ENCODE measurements at regions of chr17 and their contacts with region 1.

Region 1: DNA sequence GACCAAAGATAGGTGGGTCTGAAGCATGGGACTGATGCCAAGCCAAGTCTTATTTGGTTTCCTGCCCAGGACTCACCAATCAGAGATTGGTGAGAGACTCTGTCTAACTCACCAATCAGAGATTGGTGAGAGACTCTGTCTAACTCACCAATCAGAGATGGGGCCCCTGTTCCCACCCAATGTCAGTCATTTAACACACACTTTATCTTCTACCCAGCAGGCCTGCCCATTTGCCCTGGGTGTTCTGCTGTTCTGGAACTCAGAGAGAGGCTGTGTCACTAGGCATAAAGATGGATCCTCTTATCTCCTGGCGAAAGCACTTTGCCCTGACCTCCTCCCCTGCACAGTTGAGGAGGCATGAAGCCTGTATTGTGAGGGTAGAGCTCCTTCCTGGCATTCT is 5.4 kb upstream of the RHOT1 start:
- DNase-seq: peak in 2 of 10 donors; percentile 2 to 7
- H3K4me3 ChIP-seq: no peak overlapping the region
- H3K27ac ChIP-seq: no peak overlapping the region
- H3K27me3 ChIP-seq: no peaks in the 10 kb centered on the region
- CTCF ChIP-seq: no peak

Region 2: DNA sequence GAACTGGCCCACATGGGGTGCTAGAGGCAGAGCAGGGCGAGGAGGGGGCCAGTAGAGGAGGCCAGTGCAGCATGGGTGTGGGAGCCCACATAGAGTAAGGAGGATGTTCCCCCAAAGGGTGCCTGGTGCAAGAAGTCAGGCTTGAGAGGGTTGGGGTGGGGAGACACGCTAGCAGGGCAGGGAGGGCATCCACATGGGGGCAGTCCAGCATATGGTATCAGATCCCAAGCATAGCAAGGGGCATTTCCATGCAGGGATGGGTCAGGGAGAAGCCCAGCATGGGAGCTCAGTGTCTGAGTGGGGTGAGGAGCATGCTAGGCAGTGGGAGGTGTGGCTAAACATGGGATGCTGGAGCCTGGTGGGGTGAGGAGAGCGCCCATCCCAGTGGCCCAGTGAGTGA is 491.5 kb before region 1 on chr17:
- intact Hi-C with region 1: no loop called
- DNase-seq: no peak
- H3K4me3 ChIP-seq: no peak overlapping the region
- H3K27ac ChIP-seq: no peak overlapping the region
- H3K27me3 ChIP-seq: peaks cover 0 to 6% (median 0%) of the 10 kb centered on the region in 45 donors
- CTCF ChIP-seq: no peak

Region 3: DNA sequence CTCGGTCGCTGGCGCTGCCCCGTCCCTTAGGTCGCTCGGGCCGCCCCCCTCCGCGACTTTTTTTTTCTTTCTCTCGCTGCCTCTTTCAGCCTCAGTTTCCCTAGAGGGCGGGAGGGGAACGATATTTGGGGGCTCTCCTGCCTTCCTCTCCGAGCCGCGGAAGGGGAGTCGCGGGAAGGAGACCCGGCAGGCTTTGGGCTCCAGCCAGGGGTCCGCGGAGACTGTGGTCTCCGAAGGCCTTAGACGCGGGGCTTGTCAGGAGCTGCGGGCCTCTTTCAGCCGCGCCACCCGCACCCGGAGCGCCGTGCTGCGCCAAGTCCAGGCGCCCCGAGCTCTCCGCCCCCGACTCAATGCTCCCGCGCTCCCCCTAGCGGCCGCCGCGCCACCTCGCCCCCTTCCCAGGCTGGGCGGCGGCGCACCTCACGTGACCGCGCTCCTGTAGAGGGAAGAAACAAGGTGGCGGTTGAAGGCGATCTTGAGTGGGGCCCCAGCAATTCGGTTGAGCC is 129.8 kb before region 1 on chr17 and contains the start of gene LRRC37B:
- intact Hi-C with region 1: loop called (anchors 2 to 5 kb)
- DNase-seq: peak; percentile 72 to 92 (median 86)
- H3K4me3 ChIP-seq: peak within 1 kb of the TSS; percentile 64 to 95 (median 80)
- H3K27ac ChIP-seq: peak within 1 kb of the TSS in 58 of 59 donors; percentile 17 to 94 (median 84)
- H3K27me3 ChIP-seq: no peaks in the 10 kb centered on the region
- CTCF ChIP-seq: peak; percentile 72 to 99 (median 92)
- total RNA-seq, gene LRRC37B: 35.2 to 99.1 (median 63.5) TPM

Measured in dorsolateral prefrontal cortex (tissue), 120 donors.